ENCODE measurements at regions of chr6 and their contacts with region 1.

Region 1: GRCh38 chr6:154276810-154277628 is 79.6 kb downstream of the IPCEF1 start:
- DNase-seq: no peak

Region 2: GRCh38 chr6:154370545-154370944 is 93.5 kb after region 1 on chr6:
- intact Hi-C with region 1: loop called (anchors 10 kb)
- DNase-seq: no peak

Measured in cardiac septum (tissue), 1 donor.